ENCODE measurements at regions of chr1 and their contacts with region 1.

Region 1: DNA sequence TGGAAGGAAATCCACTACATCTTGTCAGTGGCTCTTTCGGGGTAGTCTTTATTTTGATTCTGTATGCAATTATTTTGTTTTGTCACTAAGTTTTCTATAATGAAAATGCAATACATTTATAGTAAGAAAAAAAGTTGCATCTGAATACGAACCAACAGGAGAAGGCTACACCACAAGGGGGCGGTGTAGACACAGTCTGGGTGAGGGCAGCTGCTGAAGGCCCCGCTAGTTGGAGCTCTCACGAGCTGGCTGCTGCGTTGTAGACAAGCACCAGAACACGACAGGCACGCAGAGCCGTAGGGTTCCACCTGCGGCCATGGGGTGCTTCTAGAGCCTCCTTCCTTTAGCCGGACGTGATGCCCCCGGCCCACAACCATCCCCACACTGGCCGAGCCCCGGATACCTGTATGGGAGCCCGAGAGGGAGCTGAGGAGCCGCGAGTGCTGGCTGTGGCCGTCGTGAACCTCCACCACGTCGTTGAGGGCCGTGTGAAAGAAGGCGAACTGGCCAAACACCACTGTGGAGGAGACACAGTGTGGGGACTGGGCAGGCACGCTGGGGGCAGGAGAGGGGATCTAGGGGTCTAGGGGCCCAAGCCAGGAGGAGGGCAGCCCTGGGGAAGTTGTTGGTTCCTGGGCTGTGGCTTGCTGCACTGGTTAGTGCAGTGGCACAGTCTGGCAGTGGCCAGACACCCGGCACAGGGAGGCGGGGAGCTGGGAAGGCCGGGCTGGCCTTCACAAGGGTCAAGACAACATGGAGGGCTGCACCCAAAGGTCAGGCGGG is 160.8 kb downstream of the ZSCAN20 start:
- H3K4me3 ChIP-seq: no peak overlapping the region
- H3K27ac ChIP-seq: no peak overlapping the region
- H3K4me1 ChIP-seq: no peaks in the 10 kb centered on the region
- CTCF ChIP-seq: peak; percentile 91

Region 2: DNA sequence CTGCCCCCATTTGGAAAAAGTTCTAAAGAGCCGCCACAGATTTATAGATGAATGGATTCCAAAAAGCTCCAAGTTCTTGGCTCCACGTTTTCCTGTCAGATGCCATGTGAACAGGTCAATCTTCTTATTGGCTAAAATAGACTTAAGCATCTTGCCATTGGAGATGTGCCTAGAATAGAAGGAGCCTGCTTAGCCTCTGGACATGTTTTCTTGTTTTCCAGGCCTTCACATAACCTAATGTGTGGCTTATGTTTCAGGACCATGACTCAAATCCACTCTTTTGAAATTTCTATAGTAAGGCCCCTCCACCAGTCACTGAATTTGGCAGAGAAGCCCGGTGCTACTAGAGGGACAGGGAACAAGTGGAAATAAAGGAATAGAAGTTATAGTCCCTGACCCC is 233.8 kb before region 1 on chr1:
- CTCF ChIA-PET with region 1: no interaction called
- POLR2A ChIA-PET with region 1: no interaction called
- H3K4me3 ChIP-seq: no peak overlapping the region
- H3K27ac ChIP-seq: no peak overlapping the region
- H3K4me1 ChIP-seq: no peaks in the 10 kb centered on the region
- CTCF ChIP-seq: no peak

Region 3: GRCh38 chr1:33610864-33611455 is 22.2 kb before region 1 on chr1:
- CTCF ChIA-PET with region 1: interaction called, 24 read pairs
- POLR2A ChIA-PET with region 1: no interaction called
- H3K4me3 ChIP-seq: no peak overlapping the region
- H3K27ac ChIP-seq: no peak overlapping the region
- H3K4me1 ChIP-seq: no peaks in the 10 kb centered on the region
- CTCF ChIP-seq: no peak

Region 4: DNA sequence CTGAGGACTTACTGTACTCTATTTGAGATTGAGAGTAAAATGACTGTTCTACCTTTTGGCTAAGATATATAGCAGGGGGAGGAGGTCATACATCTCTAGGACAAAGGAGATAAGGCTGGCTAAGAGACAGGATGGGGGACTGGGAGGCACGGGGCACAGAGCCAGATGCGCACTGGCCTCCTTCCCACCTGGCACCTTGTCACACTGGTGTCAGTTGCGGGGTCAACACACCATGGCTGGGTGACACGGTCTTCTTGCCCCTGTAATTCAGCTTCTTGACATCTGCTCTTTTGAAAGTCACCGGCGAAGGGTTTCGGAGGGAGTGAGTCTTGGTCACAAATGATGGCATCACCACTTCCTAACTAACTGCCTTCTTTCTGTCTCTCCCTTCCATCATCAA is 16.5 kb after region 1 on chr1:
- CTCF ChIA-PET with region 1: interaction called, 47 read pairs
- POLR2A ChIA-PET with region 1: no interaction called
- H3K4me3 ChIP-seq: no peak overlapping the region
- H3K27ac ChIP-seq: no peak overlapping the region
- H3K4me1 ChIP-seq: no peaks in the 10 kb centered on the region
- CTCF ChIP-seq: no peak

Region 5: GRCh38 chr1:33660244-33660643 is 27.0 kb after region 1 on chr1:
- CTCF ChIA-PET with region 1: interaction called, 13 read pairs
- POLR2A ChIA-PET with region 1: no interaction called
- H3K4me3 ChIP-seq: no peak overlapping the region
- H3K27ac ChIP-seq: no peak overlapping the region
- H3K4me1 ChIP-seq: no peaks in the 10 kb centered on the region
- CTCF ChIP-seq: no peak

Region 6: GRCh38 chr1:34162852-34163766 is 529.9 kb after region 1 on chr1:
- CTCF ChIA-PET with region 1: interaction called, 27 read pairs
- POLR2A ChIA-PET with region 1: interaction called, 8 read pairs
- H3K4me3 ChIP-seq: peak overlapping the region; percentile 49
- H3K27ac ChIP-seq: no peak overlapping the region
- H3K4me1 ChIP-seq: 0 out of 2 replicates have a peak, but pooled peaks cover 3% of the 10 kb centered on the region
- CTCF ChIP-seq: peak; percentile 77

Region 7: DNA sequence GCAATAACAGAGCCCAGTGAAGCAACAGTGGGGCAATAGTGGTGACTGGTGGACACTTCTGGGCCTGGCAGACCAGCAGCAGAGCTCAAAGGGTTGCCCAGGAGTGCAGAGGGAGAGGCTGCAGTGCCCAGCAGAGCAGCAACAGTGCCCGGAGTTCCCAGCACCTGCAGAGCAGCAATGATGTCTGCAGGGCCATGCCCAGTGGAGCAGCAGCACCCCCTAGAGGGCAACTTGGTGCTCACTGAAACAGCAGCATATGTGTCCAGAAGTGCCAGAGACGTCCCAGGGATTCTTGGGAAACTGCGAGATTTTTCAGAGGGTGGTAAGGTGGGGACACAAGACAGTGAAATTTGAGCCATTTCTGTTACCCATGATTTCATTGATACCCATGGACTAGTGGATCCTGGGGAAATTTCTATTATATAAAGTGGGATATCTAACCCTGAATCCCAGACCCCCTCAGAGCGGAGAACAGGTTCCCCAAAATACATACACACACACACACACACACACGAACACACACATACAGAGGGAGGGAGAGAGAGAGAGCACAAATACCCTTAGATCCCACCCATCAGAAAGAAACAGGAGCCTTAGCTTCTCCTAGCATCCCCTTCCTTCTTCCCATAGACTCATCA is 964.8 kb after region 1 on chr1:
- CTCF ChIA-PET with region 1: interaction called, 27 read pairs
- POLR2A ChIA-PET with region 1: no interaction called
- H3K4me3 ChIP-seq: no peak overlapping the region
- H3K27ac ChIP-seq: no peak overlapping the region
- H3K4me1 ChIP-seq: no peaks in the 10 kb centered on the region
- CTCF ChIP-seq: peak; percentile 88

Region 8: GRCh38 chr1:34742667-34743270 is 1109.6 kb after region 1 on chr1:
- CTCF ChIA-PET with region 1: interaction called, 39 read pairs
- POLR2A ChIA-PET with region 1: interaction called, 5 read pairs
- H3K4me3 ChIP-seq: no peak overlapping the region
- H3K27ac ChIP-seq: no peak overlapping the region
- H3K4me1 ChIP-seq: no peaks in the 10 kb centered on the region
- CTCF ChIP-seq: peak; percentile 93